ENCODE measurements at regions of chr19 and their contacts with region 1.

Region 1: DNA sequence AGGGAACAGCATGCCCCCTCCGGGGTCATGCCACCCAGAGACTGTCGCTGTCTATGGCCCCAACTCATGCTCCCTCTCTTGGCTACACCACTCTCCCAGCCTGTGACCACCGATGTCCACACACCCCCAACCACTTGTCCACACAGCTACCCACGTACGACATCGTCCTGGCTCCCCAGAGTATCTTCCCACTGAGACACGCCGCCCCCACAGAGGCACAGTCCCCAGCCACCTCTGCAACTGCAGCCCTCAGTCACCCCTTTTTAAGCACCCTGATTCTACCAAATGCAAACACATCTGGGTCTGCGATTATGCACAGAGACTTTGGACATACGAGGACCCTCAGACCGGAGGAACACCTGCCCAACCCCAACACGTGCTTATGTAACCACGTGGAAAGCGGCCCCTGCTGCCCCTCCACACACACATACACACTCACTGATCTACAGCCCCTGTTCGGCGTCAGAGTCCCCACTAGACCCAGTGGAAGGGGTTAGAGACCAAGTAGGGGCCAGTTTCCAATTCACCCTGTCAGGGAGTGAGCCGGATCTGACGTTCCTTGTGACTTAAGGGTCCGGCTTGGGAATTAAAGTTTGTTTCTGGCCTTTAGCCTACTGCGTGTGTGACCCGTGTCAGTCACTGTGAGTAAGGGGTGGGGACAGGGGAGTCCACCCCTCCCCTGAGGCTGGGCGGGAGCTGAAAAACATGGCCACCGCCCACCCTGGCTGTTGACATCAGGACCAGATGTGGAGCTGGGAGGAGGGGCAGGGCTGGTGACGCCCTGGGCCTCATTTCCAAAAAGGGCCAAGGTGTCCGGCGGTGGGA is 11.9 kb upstream of the AXL start:
- DNase-seq: no peak
- ATAC-seq: peak; percentile 64
- H3K4me3 Mint-ChIP-seq: no peak overlapping the region
- H3K27ac Mint-ChIP-seq: peak overlapping the region; percentile 54
- H3K4me1 Mint-ChIP-seq: peaks cover 2% of the 10 kb centered on the region
- H3K27me3 Mint-ChIP-seq: no peaks in the 10 kb centered on the region
- CTCF ChIP-seq: no peak

Region 2: GRCh38 chr19:41172297-41173164 is 34.6 kb before region 1 on chr19:
- CTCF ChIA-PET with region 1: interaction called, 13 read pairs
- POLR2A ChIA-PET with region 1: no interaction called
- DNase-seq: no peak
- ATAC-seq: peak; percentile 6
- H3K4me3 Mint-ChIP-seq: no peak overlapping the region
- H3K27ac Mint-ChIP-seq: peak overlapping the region; percentile 15; the same call in 1 of the 2 replicates
- H3K4me1 Mint-ChIP-seq: peaks cover 43% of the 10 kb centered on the region
- H3K27me3 Mint-ChIP-seq: no peaks in the 10 kb centered on the region
- CTCF ChIP-seq: no peak

Region 3: GRCh38 chr19:41192574-41193429 is 14.3 kb before region 1 on chr19 and contains the start of gene CYP2S1:
- CTCF ChIA-PET with region 1: interaction called, 22 read pairs
- POLR2A ChIA-PET with region 1: no interaction called
- DNase-seq: peak; percentile 78
- ATAC-seq: peak; percentile 65
- H3K4me3 Mint-ChIP-seq: peak within 1 kb of the TSS; percentile 93
- H3K27ac Mint-ChIP-seq: peak within 1 kb of the TSS; percentile 88
- H3K4me1 Mint-ChIP-seq: peaks cover 67% of the 10 kb centered on the region
- H3K27me3 Mint-ChIP-seq: no peaks in the 10 kb centered on the region
- CTCF ChIP-seq: no peak
- total RNA-seq, gene CYP2S1: 173 to 191 TPM (median 188 TPM) in 3 replicates

Region 4: GRCh38 chr19:41218615-41219507 is 11.7 kb after region 1 on chr19 and contains the start of gene AXL:
- CTCF ChIA-PET with region 1: interaction called, 10 read pairs
- POLR2A ChIA-PET with region 1: no interaction called
- DNase-seq: peak; percentile 82
- ATAC-seq: peak; percentile 82
- H3K4me3 Mint-ChIP-seq: peak within 1 kb of the TSS; percentile 78
- H3K27ac Mint-ChIP-seq: peak within 1 kb of the TSS; percentile 68
- H3K4me1 Mint-ChIP-seq: peaks cover 44% of the 10 kb centered on the region
- H3K27me3 Mint-ChIP-seq: no peaks in the 10 kb centered on the region; the same call in 1 of the 2 replicates
- CTCF ChIP-seq: no peak
- total RNA-seq, gene AXL: 25.0 to 27.3 TPM (median 27.0 TPM) in 3 replicates

Region 5: DNA sequence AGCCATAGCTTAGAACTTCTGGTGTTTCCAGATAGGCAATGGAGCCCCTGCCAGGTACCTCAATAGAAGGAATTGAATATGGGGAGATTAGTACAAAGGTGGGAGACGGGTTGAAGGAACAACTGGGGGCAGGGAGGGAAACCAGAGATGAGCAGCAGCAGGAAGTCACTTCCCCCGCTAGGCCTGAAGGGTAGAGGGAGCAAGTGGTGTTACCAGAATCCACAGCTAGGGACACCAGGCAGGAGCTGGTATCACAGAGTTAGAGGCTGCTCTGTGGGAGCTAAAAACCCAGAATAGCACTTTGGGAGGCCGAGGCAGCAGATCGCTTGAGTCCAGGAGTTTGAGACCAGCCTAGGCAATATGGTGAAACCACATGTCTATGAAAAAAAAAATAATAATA is 41.8 kb after region 1 on chr19:
- CTCF ChIA-PET with region 1: interaction called, 10 read pairs
- POLR2A ChIA-PET with region 1: no interaction called
- DNase-seq: no peak
- ATAC-seq: peak; percentile 67
- H3K4me3 Mint-ChIP-seq: no peak overlapping the region
- H3K27ac Mint-ChIP-seq: no peak overlapping the region
- H3K4me1 Mint-ChIP-seq: no peaks in the 10 kb centered on the region
- H3K27me3 Mint-ChIP-seq: no peaks in the 10 kb centered on the region
- CTCF ChIP-seq: no peak

Measured in WTC11 (cell line).